ENCODE measurements at regions of chr1 and their contacts with region 1.

Region 1: GRCh38 chr1:203006948-203007871 is at the start of gene TMEM183A:
- DNase-seq: peak; percentile 96 to 100 (median 96)
- ATAC-seq: peak; percentile 94
- H3K4me3 ChIP-seq: peak within 1 kb of the TSS; percentile 89
- H3K27ac ChIP-seq: peak within 1 kb of the TSS; percentile 99
- H3K4me1 ChIP-seq: peaks cover 14 to 19% of the 10 kb centered on the region in 2 experiments
- H3K27me3 ChIP-seq: no peaks in the 10 kb centered on the region
- CTCF ChIP-seq: no peak
- EP300 ChIP-seq: no peak
- POLR2A ChIP-seq: peak; percentile 99
- RAD21 ChIP-seq: no peak
- polyA plus RNA-seq, gene TMEM183A: 23.4 to 31.8 TPM

Region 2: DNA sequence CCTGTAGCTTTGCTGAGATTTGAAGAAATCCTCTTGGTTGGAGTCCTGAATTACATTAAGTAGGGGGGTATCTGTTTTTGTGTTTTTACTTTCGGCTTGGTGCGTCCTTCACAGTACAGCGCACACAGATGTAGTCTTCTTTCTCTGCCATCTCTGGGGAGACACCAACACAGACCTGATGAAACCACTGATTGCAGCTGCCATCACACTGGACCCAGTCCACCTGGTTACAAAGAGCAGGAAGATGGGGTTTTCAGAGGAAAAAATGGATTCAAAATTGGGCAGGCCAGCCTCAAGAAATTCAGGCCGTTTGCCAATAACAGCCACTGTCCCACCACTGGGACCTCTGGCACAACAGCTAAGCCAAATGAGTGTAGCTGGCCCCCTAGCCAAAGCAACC is 278.3 kb before region 1 on chr1:
- CTCF ChIA-PET with region 1: no interaction called
- POLR2A ChIA-PET with region 1: no interaction called
- in situ Hi-C with region 1: no loop called
- intact Hi-C with region 1: loop called (anchors 10 kb)
- DNase-seq: no peak
- ATAC-seq: no peak
- H3K4me3 ChIP-seq: no peak overlapping the region
- H3K27ac ChIP-seq: no peak overlapping the region
- H3K4me1 ChIP-seq: no peaks in the 10 kb centered on the region
- H3K27me3 ChIP-seq: no peaks in the 10 kb centered on the region
- CTCF ChIP-seq: no peak
- EP300 ChIP-seq: no peak
- POLR2A ChIP-seq: no peak
- RAD21 ChIP-seq: no peak

Region 3: DNA sequence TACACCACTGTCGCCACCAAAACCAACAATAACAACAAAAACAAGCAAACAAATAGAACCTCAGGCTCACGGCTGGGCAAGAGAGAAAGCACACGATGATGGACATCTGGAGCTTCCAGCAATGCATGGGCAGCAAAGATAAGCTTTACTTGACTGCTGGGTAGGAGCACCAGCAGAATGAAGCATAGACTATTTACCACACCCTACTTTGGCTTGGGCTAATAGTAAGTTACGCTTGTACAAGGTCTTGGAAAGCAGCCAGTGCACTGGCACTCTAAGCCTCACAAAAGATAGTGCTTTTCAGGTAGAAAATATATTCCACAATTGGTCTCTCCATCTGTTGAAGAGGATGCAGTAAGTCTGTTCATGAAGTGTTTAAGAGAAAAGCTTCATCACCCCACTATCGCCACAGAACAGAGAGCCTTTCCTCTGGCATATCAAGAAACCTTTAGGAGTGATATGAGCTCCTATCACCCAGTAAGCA is 62.7 kb before region 1 on chr1:
- CTCF ChIA-PET with region 1: no interaction called
- POLR2A ChIA-PET with region 1: interaction called, 11 read pairs
- in situ Hi-C with region 1: no loop called
- intact Hi-C with region 1: no loop called
- DNase-seq: peak; percentile 80 to 93 (median 88)
- ATAC-seq: peak; percentile 94
- H3K4me3 ChIP-seq: no peak overlapping the region
- H3K27ac ChIP-seq: peak overlapping the region; percentile 58
- H3K4me1 ChIP-seq: peaks cover 2 to 28% of the 10 kb centered on the region in 2 experiments; a peak in 3 of 5 replicates
- H3K27me3 ChIP-seq: no peaks in the 10 kb centered on the region
- CTCF ChIP-seq: 0 out of 6 replicates have a peak, but pooled peaks of 1 of the 3 experiments have one; percentile 1
- EP300 ChIP-seq: peak; percentile 73
- POLR2A ChIP-seq: no peak
- RAD21 ChIP-seq: no peak

Region 4: DNA sequence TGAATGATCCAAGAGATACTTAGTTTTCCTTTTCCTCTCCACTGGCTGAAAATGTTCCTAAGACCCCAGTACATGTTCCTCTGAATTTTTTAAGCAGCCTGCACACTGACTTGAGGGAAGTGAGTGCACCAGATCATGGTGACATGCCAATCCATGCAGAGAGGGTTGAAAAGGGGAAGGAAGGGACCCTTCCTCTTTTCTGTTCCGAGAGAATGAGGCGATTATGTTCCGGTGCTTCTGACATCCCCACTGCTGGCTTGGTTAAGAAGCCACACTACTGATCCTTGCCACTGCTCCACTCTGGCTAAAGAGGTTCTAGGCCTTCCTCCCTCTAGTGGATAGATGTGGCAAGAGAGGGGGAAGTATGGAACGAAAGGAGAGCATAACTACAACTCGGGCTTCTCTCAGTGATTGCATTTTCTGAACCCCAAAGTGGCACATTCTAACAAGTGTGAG is 38.3 kb before region 1 on chr1:
- CTCF ChIA-PET with region 1: no interaction called
- POLR2A ChIA-PET with region 1: interaction called, 13 read pairs
- in situ Hi-C with region 1: no loop called
- intact Hi-C with region 1: no loop called
- DNase-seq: peak; percentile 74 to 90 (median 81)
- ATAC-seq: peak; percentile 90
- H3K4me3 ChIP-seq: no peak overlapping the region
- H3K27ac ChIP-seq: no peak overlapping the region; the same call in 2 of the 3 replicates
- H3K4me1 ChIP-seq: peaks cover 20 to 24% of the 10 kb centered on the region in 2 experiments
- H3K27me3 ChIP-seq: no peaks in the 10 kb centered on the region; a peak in 1 of 5 replicates
- CTCF ChIP-seq: peak; percentile 94 to 96 (median 95)
- EP300 ChIP-seq: peak; percentile 41; the same call in 1 of the 2 replicates
- POLR2A ChIP-seq: no peak
- RAD21 ChIP-seq: peak; percentile 69 to 80

Region 5: GRCh38 chr1:203017692-203018091 is 10.5 kb after region 1 on chr1:
- CTCF ChIA-PET with region 1: no interaction called
- POLR2A ChIA-PET with region 1: interaction called, 14 read pairs
- in situ Hi-C with region 1: no loop called
- intact Hi-C with region 1: no loop called
- DNase-seq: no peak
- ATAC-seq: no peak
- H3K4me3 ChIP-seq: no peak overlapping the region
- H3K27ac ChIP-seq: no peak overlapping the region
- H3K4me1 ChIP-seq: no peaks in the 10 kb centered on the region
- H3K27me3 ChIP-seq: no peaks in the 10 kb centered on the region
- CTCF ChIP-seq: no peak
- EP300 ChIP-seq: no peak
- POLR2A ChIP-seq: no peak
- RAD21 ChIP-seq: no peak

Region 6: GRCh38 chr1:203031467-203031866 is 24.3 kb after region 1 on chr1:
- CTCF ChIA-PET with region 1: no interaction called
- POLR2A ChIA-PET with region 1: interaction called, 12 read pairs
- in situ Hi-C with region 1: no loop called
- intact Hi-C with region 1: no loop called
- DNase-seq: peak; percentile 55 to 67 (median 61)
- ATAC-seq: peak; percentile 52
- H3K4me3 ChIP-seq: no peak overlapping the region
- H3K27ac ChIP-seq: no peak overlapping the region
- H3K4me1 ChIP-seq: peaks cover 6 to 23% of the 10 kb centered on the region in 2 experiments; a peak in 4 of 5 replicates
- H3K27me3 ChIP-seq: peaks cover 14 to 15% of the 10 kb centered on the region in 2 experiments; a peak in 3 of 5 replicates
- CTCF ChIP-seq: peak; percentile 73 to 91 (median 89)
- EP300 ChIP-seq: no peak; the same call in 1 of the 2 replicates
- POLR2A ChIP-seq: no peak
- RAD21 ChIP-seq: peak in 1 of 2 experiments; percentile 62; a peak in 2 of 4 replicates

Region 7: GRCh38 chr1:203202431-203203245 is 195.4 kb after region 1 on chr1:
- CTCF ChIA-PET with region 1: no interaction called
- POLR2A ChIA-PET with region 1: no interaction called
- in situ Hi-C with region 1: no loop called
- intact Hi-C with region 1: no loop called
- DNase-seq: no peak
- ATAC-seq: no peak
- H3K4me3 ChIP-seq: no peak overlapping the region
- H3K27ac ChIP-seq: no peak overlapping the region
- H3K4me1 ChIP-seq: no peaks in the 10 kb centered on the region
- H3K27me3 ChIP-seq: peaks cover 34 to 63% of the 10 kb centered on the region in 2 experiments
- CTCF ChIP-seq: no peak
- EP300 ChIP-seq: no peak
- POLR2A ChIP-seq: no peak
- RAD21 ChIP-seq: no peak

Measured in K562 (cell line).